ENCODE measurements at regions of chr12 and their contacts with region 1.

Region 1: GRCh38 chr12:122471324-122472226 is 29.2 kb downstream of the ZCCHC8 start:
- DNase-seq: peak; percentile 58
- H3K4me3 ChIP-seq: no peak overlapping the region
- H3K27ac ChIP-seq: peak overlapping the region; percentile 55
- H3K4me1 ChIP-seq: peaks cover 15% of the 10 kb centered on the region
- H3K27me3 ChIP-seq: no peaks in the 10 kb centered on the region
- CTCF ChIP-seq: peak; percentile 74 to 79

Region 2: DNA sequence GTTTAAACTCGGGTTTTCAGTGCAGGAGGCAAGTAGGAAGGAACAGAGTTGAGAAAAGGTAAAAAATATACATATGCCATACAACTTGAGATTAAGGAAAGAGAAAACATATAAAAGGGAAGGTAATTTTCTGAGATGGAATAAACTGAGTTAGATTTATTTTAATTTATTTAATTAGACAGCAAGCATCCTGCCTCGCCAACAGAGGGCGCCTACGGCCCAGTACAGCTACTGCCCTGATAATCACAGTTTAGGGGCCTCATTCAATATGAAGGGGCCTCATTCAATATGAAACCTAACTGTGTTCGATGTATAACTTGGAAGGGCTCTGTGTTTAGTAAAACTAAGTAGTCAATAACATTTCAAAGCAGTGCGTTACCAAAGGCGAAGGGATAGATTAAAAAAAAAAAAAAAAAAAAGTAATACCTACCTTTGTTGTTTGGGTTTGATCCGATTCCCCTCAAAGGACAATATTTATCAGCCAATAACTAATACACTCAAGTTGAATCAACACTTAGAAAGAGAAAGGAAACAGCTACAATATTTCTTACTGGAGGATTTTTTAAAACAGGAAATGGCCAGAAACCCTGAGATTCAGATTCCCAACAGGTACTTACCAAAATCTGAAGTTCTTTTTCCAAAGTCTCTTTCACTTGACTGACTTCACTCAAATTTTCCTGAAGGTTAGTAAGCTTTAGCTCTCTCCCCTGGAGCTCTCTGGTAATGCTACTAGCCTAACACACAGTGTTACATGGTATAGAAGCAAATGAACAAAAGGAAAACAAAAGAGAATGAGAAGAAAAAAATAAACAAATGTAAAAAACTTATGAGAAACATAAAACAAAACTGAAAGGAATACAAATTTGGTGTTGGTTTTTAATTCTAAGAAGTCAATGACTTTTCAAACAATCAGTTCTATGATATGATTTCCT is 135.3 kb before region 1 on chr12:
- CTCF ChIA-PET with region 1: interaction called, 4 read pairs
- dilution Hi-C with region 1: no loop called
- in situ Hi-C with region 1: no loop called
- intact Hi-C with region 1: loop called (anchors 1 kb)
- DNase-seq: no peak
- H3K4me3 ChIP-seq: no peak overlapping the region
- H3K27ac ChIP-seq: no peak overlapping the region
- H3K4me1 ChIP-seq: no peaks in the 10 kb centered on the region
- H3K27me3 ChIP-seq: no peaks in the 10 kb centered on the region
- CTCF ChIP-seq: peak; percentile 81 to 88

Region 3: DNA sequence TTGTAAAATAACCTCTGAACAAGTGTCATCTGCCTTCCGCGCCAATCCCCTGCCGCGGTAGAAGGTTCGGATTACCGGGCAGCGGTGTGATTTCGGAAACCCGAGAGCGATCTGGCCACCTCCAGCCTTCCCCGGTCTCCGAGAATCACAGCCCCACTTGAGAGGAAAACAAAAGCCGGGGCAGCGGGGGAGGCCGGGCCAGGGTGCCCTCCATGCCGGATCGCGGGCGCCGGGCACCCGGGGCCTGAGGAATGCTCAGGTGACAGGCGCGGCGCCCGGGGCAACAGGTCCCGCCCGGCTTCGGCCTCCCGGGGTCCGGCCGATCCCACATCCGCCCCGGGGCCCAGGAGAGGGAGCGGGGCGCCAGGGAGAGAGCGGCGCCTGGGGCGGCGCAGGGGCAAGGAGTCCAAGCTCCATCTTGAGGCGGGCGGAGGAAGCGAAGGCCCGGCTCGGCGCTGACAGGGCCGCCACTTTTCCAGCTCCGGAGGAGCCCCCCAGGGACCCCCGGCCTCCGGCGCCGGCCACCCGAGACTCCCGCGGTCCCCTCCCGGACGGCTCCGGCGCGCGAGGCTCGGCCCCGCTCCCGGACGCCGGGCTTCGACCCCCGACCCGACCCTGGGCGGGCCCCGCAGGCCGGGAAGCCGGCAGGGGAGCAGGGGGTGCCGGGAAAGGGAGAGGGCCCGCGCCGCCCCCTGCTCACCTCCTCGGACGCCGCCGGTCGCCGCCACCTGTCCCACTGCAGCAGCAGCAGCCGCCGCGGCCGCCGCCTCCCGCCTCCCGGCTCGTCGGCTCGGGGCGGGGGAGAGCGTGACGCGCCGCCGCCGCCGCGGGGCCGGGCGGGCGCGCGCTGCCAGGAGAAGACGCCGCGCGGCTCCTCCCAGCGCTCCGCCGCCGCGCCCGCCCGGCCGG is 49.5 kb before region 1 on chr12 and contains the start of gene CLIP1:
- CTCF ChIA-PET with region 1: interaction called, 4 read pairs
- dilution Hi-C with region 1: no loop called
- in situ Hi-C with region 1: no loop called
- intact Hi-C with region 1: loop called (anchors 1 kb)
- DNase-seq: peak; percentile 68
- H3K4me3 ChIP-seq: peak within 1 kb of the TSS; percentile 70 to 79 (median 75)
- H3K27ac ChIP-seq: peak within 1 kb of the TSS; percentile 95
- H3K4me1 ChIP-seq: peaks cover 21% of the 10 kb centered on the region
- H3K27me3 ChIP-seq: no peaks in the 10 kb centered on the region
- CTCF ChIP-seq: peak in 1 of 2 donors; percentile 56
- total RNA-seq, gene CLIP1: 86.1 to 97.4 TPM

Region 4: GRCh38 chr12:122449353-122449752 is 22.2 kb before region 1 on chr12:
- CTCF ChIA-PET with region 1: no interaction called
- dilution Hi-C with region 1: no loop called
- in situ Hi-C with region 1: no loop called
- intact Hi-C with region 1: loop called (anchors 1 kb)
- DNase-seq: peak; percentile 92
- H3K4me3 ChIP-seq: no peak overlapping the region
- H3K27ac ChIP-seq: no peak overlapping the region
- H3K4me1 ChIP-seq: peaks cover 5% of the 10 kb centered on the region
- H3K27me3 ChIP-seq: no peaks in the 10 kb centered on the region
- CTCF ChIP-seq: no peak